CD8-positive, alpha-beta T cell (primary cell): ENCODE measurements at regions of chr11 and their contacts with region 1.

Region 1: GRCh38 chr11:120363436-120363835 is 27.2 kb downstream of the ARHGEF12 start:
- DNase-seq: no peak
- ATAC-seq: no peak
- H3K4me3 ChIP-seq: no peak overlapping the region
- H3K4me3 Mint-ChIP-seq: no peak overlapping the region
- H3K27ac ChIP-seq: no peak overlapping the region
- H3K27ac Mint-ChIP-seq: no peak overlapping the region
- H3K4me1 ChIP-seq: no peaks in the 10 kb centered on the region
- H3K4me1 Mint-ChIP-seq: no peaks in the 10 kb centered on the region
- H3K27me3 ChIP-seq: no peaks in the 10 kb centered on the region
- H3K27me3 Mint-ChIP-seq: peaks cover 9% of the 10 kb centered on the region
- CTCF ChIP-seq: no peak

Region 2: GRCh38 chr11:119728651-119729580 is 634.5 kb before region 1 on chr11 and contains the start of gene NECTIN1:
- CTCF ChIA-PET with region 1: no interaction called
- POLR2A ChIA-PET with region 1: no interaction called
- intact Hi-C with region 1: no loop called
- DNase-seq: peak; percentile 67 to 90 (median 84)
- ATAC-seq: peak; percentile 86
- H3K4me3 ChIP-seq: peak within 1 kb of the TSS; percentile 56 to 88
- H3K4me3 Mint-ChIP-seq: peak within 1 kb of the TSS; percentile 94
- H3K27ac ChIP-seq: no peak within 1 kb of the TSS
- H3K27ac Mint-ChIP-seq: peak within 1 kb of the TSS; percentile 86
- H3K4me1 ChIP-seq: peaks cover 20% of the 10 kb centered on the region
- H3K4me1 Mint-ChIP-seq: peaks cover 19% of the 10 kb centered on the region
- H3K27me3 ChIP-seq: peaks cover 9 to 15% of the 10 kb centered on the region in 2 experiments
- H3K27me3 Mint-ChIP-seq: peaks cover 16% of the 10 kb centered on the region
- CTCF ChIP-seq: peak; percentile 96
- total RNA-seq, gene NECTIN1: 6.4 to 6.9 TPM

Region 3: DNA sequence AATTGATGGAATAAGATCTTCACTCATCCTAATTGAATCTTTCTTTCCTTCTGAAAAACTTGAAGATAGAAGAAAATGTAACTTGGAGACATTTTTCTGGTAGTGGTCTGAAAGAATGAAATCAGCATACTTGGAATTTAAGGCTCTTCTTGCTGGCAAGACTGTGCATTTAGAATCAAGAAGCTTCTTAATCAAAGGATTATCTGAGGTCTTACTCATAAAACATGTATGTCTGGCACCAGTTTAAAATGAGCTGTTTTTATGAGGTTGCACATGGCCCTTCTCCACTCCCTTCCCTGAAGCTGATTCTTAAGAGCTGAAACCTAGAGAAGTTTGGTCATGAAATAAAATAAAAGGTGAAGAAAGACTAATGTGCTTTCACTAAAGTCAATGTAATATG is 50.0 kb after region 1 on chr11:
- CTCF ChIA-PET with region 1: no interaction called
- POLR2A ChIA-PET with region 1: no interaction called
- intact Hi-C with region 1: loop called in 1 of 2 experiments (anchors 10 kb)
- DNase-seq: no peak
- ATAC-seq: no peak
- H3K4me3 ChIP-seq: no peak overlapping the region
- H3K4me3 Mint-ChIP-seq: no peak overlapping the region
- H3K27ac ChIP-seq: no peak overlapping the region
- H3K27ac Mint-ChIP-seq: no peak overlapping the region
- H3K4me1 ChIP-seq: no peaks in the 10 kb centered on the region
- H3K4me1 Mint-ChIP-seq: no peaks in the 10 kb centered on the region
- H3K27me3 ChIP-seq: no peaks in the 10 kb centered on the region
- H3K27me3 Mint-ChIP-seq: peaks cover 5% of the 10 kb centered on the region
- CTCF ChIP-seq: no peak